Posterior cingulate gyrus (tissue), 11 donors: ENCODE measurements at regions of chr3 and their contacts with region 1.

Region 1: DNA sequence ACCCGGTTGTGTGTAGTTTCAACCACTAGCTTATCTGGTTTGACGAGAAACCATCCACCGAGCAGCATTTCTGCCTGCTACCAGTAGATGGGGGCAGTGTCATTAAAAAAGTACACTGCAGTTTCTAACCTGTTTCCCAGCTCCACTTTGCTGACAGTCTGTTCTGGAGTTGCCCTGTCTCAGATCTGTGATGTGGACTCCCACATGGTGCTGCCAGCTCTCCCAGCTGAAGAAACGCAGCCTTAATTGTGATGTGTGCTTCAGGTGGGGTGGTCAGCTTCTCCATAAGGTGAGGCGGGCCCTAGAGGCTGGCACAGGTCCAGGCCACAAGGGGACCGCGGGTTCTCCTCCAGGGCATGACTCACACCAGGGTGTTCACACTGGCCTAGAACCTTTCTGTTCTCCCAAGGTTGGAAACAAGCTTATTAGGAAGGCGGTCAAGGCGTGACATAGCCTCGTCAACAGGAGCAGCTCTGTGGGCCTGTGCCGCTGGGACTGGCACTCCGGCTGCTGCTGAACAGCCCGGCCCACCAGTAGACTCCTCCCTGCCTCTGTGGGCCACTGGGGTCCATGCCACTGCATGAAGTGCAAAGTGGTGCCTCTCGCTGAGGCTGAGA is 2.9 kb upstream of the FAM43A start:
- DNase-seq: peak; percentile 54 to 93 (median 70)

Region 2: GRCh38 chr3:194952841-194953241 is 270.0 kb after region 1 on chr3:
- intact Hi-C with region 1: loop called (anchors 10 kb)
- DNase-seq: no peak

Region 3: DNA sequence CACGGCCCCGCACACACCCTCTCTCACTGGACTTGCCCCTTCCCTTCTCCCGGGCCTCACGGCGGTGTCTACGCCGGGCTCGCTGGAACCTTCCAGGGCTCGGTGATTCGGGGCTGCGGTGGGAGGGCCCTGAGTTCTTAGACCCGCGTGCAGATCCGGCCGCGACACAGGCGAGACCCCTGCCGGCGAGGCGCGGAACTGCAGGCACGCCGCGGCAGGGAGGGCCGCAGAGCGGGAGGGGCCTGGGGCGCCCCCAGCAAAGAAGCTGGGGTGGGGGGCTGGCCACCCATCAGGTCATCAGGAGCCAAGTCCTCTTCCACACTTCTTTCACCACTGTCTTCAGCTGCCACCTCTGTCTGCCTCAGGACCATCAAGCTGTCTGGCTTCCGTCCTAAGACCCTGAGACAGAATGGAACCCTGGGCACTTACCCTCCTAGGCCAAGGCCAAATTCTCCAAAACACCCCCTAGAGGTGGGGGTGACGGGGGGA is 423.7 kb after region 1 on chr3:
- intact Hi-C with region 1: loop called (anchors 1 kb)
- DNase-seq: peak; percentile 47 to 96 (median 72)